ENCODE measurements at regions of chrX and their contacts with region 1.

Region 1: DNA sequence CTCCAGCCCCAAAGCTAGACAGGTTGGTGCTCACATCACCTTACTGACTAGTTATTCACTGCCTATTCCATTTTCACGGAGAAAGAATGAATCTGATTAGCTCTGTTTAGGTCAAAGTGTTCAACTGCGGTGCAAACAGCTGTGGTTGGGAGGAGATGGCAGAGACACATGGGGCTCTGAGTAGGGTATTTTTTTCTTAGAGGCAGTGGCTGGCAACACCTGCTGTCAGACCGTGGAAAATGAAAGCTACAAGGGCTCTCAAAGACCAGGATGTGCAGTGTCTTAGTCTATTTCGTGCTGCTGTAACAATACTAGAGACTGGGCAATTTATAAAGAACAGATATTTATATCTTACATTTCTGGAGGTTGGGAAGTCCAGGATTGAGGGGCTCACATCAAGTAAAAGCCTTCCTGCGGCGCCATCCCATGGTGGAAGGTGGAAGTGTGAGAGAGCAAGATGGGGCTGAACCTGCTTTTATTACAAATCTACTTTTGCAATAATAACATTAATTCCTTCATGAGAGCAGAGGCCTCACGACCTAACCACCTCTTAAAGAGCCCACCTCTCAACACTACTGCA is 10.6 kb downstream of the NYX start:
- DNase-seq: peak; percentile 36
- H3K4me3 Mint-ChIP-seq: no peak overlapping the region
- H3K27ac Mint-ChIP-seq: peak overlapping the region; percentile 72
- H3K4me1 Mint-ChIP-seq: peaks cover 17% of the 10 kb centered on the region
- H3K27me3 Mint-ChIP-seq: no peaks in the 10 kb centered on the region

Region 2: DNA sequence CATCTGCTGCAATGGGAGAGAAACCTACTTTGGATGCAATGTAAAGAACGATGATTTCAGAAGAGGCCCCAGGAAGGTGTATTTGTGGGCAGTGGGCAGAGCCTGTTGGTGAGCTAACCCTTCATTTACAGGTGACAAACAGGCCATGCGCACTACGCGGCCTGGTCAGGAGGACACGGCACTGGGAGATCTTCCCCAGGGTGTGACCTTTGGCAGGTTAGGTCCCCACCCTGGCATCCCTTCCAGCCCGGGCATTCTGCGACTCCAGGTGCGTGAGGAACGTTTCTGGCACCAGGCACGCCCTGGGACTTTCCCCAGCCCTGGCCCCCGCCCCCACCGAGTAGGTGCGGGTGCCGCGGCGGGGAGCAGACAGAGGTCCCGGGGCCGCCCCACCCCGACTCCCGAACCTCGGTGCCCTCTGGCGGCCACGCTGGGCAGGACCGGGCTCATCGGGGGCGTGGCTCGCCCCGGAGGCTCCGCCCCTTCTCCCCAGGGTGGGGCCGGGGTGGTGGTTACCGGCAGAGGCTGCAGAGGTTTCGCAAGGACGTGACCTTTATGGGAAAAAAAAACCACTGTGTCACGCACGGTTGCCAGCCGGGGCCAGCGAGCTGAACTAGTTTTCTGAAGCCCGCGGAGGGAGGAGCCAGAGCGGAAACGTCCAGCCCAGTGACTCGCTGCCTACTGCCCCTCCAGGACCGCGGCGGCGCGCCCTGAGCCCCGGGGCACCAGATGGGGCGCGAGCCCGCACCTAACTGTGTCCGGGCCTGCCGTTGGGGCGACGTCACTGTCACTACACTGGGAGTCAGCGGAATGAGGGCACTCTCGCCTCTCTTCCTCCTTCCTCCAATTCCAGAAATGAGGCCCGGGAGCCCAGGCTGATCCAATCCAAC is 15.5 kb before region 1 on chrX:
- CTCF ChIA-PET with region 1: interaction called, 10 read pairs
- POLR2A ChIA-PET with region 1: no interaction called
- DNase-seq: peak; percentile 83
- H3K4me3 Mint-ChIP-seq: peak overlapping the region; percentile 45
- H3K27ac Mint-ChIP-seq: peak overlapping the region; percentile 78
- H3K4me1 Mint-ChIP-seq: peaks cover 20% of the 10 kb centered on the region
- H3K27me3 Mint-ChIP-seq: no peaks in the 10 kb centered on the region

Region 3: GRCh38 chrX:41491267-41492004 is 33.7 kb after region 1 on chrX:
- CTCF ChIA-PET with region 1: no interaction called
- POLR2A ChIA-PET with region 1: no interaction called
- DNase-seq: no peak
- H3K4me3 Mint-ChIP-seq: no peak overlapping the region
- H3K27ac Mint-ChIP-seq: no peak overlapping the region
- H3K4me1 Mint-ChIP-seq: no peaks in the 10 kb centered on the region
- H3K27me3 Mint-ChIP-seq: no peaks in the 10 kb centered on the region

Region 4: DNA sequence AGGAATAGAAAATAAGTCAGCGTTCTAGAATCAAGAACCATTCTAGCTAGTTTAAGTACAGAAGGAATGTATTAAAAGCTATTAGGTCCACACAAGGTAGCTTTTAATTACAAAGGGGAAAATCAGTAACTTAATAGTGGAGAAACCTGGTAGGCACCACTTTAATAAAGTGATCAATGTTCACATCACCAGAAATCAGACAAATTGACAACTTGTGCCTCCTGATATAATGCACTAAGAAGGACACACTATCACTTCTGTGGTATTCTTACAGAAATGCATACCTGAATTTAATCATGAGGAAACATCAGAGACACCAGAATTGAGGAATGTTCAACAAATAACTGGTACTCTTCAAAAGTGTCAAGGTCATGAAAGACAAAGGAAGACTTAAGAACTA is 44.3 kb after region 1 on chrX:
- CTCF ChIA-PET with region 1: no interaction called
- POLR2A ChIA-PET with region 1: no interaction called
- DNase-seq: no peak
- H3K4me3 Mint-ChIP-seq: no peak overlapping the region
- H3K27ac Mint-ChIP-seq: no peak overlapping the region
- H3K4me1 Mint-ChIP-seq: peaks cover 8% of the 10 kb centered on the region
- H3K27me3 Mint-ChIP-seq: no peaks in the 10 kb centered on the region